Activated naive CD4-positive, alpha-beta T cell treated with anti-CD3 and anti-CD28 coated beads for 36 hours (primary cell): ENCODE measurements at regions of chr1 and their contacts with region 1.

Region 1: GRCh38 chr1:184036517-184036949 is 995 bp downstream of the COLGALT2 start:
- DNase-seq: peak; percentile 23
- H3K4me3 Mint-ChIP-seq: peak overlapping the region; percentile 58
- H3K27ac Mint-ChIP-seq: no peak overlapping the region
- H3K4me1 Mint-ChIP-seq: peaks cover 15% of the 10 kb centered on the region
- H3K27me3 Mint-ChIP-seq: peaks cover 68% of the 10 kb centered on the region

Region 2: GRCh38 chr1:183956559-183957188 is 79.9 kb before region 1 on chr1:
- CTCF ChIA-PET with region 1: interaction called, 3 read pairs
- intact Hi-C with region 1: loop called (anchors 1 kb)
- DNase-seq: peak; percentile 71
- H3K4me3 Mint-ChIP-seq: no peak overlapping the region
- H3K27ac Mint-ChIP-seq: peak overlapping the region; percentile 86
- H3K4me1 Mint-ChIP-seq: no peaks in the 10 kb centered on the region
- H3K27me3 Mint-ChIP-seq: no peaks in the 10 kb centered on the region

Region 3: GRCh38 chr1:184152434-184152898 is 115.9 kb after region 1 on chr1:
- CTCF ChIA-PET with region 1: no interaction called
- intact Hi-C with region 1: no loop called
- DNase-seq: no peak
- H3K4me3 Mint-ChIP-seq: peak overlapping the region; percentile 49
- H3K27ac Mint-ChIP-seq: no peak overlapping the region
- H3K4me1 Mint-ChIP-seq: peaks cover 11% of the 10 kb centered on the region
- H3K27me3 Mint-ChIP-seq: peaks cover 33% of the 10 kb centered on the region